Kidney (tissue), 22 donors: ENCODE measurements at regions of chr7 and their contacts with region 1.

Region 1: DNA sequence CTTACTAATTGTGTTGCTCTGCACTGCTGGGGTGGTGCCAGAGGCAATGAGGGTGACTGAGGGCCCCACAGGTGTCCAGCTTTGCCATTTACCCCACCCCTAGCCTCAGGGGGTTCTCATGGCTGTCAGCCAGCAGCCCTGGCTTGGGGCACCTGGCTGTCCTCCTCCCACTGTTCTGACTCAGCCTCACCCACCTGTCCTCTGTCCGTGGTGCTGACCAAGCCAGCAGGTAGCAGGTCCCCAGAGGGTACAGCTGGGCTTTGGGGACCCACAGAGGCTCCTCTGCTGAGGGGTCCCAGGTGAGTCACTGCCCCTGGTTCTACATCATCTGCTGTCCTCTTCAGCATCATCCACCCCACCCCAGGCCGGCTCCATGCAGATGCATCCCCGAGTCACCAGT is 32.2 kb upstream of the ZNF716 start:
- DNase-seq: peak in 1 of 5 donors; percentile 38
- H3K4me3 ChIP-seq: no peak overlapping the region
- H3K27ac ChIP-seq: no peak overlapping the region
- H3K4me1 ChIP-seq: no peaks in the 10 kb centered on the region
- H3K27me3 ChIP-seq: no peaks in the 10 kb centered on the region
- CTCF ChIP-seq: no peak

Region 2: GRCh38 chr7:57354679-57355338 is 62.9 kb before region 1 on chr7:
- intact Hi-C with region 1: loop called (anchors 10 kb)
- DNase-seq: no peak
- H3K4me3 ChIP-seq: no peak overlapping the region
- H3K27ac ChIP-seq: no peak overlapping the region
- H3K4me1 ChIP-seq: no peaks in the 10 kb centered on the region
- H3K27me3 ChIP-seq: no peaks in the 10 kb centered on the region
- CTCF ChIP-seq: no peak